ENCODE measurements at regions of chr20 and their contacts with region 1.

Region 1: DNA sequence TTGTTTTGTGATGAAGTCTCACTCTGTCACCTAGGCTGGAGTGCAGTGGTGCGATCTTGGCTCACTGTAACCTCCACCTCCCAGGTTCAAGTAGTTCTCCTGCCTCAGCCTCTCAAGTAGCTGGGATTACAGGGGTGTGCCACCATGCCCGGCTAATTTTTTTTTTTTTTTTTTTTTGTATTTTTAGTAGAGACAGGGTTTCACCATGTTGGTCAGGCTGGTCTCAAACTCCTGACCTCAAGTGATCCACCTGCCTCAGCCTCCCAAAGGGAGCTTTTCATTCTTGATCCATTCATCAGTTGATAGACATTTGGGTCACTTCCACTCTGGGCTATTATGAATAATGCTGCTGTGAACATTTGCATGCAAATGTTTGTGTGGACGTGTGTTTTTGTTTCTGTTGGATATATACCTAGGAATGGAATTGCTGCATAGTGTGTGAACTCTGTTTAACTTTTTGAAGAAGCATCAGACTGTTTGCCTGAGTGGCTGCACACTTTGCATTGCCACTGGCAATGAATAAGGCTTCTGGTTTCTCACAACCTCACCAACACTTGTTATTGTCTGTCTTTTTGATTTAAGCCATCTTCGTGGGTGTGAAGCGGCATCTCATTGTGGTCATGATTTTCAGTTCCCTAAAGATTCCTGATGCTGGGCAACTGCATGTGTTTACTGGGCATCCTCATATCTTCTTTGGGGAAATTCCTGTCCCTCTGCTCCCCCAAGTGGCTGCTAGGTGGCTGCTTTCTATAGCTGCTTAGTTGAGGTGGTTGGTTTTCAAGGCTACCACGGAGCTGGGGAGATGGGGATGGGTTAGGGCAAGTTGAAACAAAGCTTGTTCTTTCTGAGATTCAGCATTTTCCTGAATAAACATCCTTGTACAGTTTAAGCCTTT is 403.6 kb upstream of the SULF2 start:
- DNase-seq: peak; percentile 83
- H3K4me3 ChIP-seq: no peak overlapping the region
- H3K27ac ChIP-seq: no peak overlapping the region
- H3K4me1 ChIP-seq: peaks cover 31% of the 10 kb centered on the region
- H3K27me3 ChIP-seq: no peaks in the 10 kb centered on the region
- CTCF ChIP-seq: peak; percentile 57 to 81

Region 2: DNA sequence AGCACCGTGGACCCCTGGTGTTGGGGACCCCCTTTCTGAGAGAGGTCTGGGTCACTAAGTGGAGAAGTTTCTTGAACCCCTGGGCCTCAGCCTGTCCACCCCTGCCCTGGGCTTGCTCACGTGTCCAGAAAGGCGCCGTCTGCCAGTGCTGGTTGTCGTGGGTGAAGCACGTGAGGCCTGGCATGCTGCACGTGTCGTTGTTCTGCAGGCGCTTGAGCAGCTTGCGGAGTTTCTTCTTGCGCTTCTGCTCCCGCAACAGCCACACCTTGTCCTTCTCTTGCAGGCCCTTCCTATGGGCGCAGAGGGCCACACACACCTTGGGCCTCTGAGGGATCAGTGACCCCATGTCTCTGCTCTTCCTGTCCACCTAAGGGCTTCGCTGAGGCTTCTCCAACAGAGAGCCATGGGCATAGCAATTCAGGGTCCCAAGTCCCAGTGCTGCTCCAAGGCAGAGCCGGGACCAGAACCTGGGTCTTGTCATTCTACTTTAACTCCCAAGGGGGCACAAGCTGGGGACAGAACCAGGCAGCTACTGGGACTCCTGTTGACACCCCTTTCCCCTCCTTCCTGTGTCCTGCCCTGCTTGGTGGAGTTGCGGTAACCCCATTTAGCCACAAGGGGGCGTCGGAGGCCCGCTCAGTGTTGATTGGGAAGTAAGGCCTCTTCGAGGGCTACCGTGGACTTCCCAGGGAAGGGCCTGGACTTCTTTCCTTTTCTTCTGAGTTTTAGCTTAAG is 525.4 kb before region 1 on chr20:
- CTCF ChIA-PET with region 1: no interaction called
- dilution Hi-C with region 1: no loop called
- in situ Hi-C with region 1: no loop called
- intact Hi-C with region 1: loop called (anchors 1 kb)
- DNase-seq: peak; percentile 67
- H3K4me3 ChIP-seq: no peak overlapping the region
- H3K27ac ChIP-seq: no peak overlapping the region
- H3K4me1 ChIP-seq: peaks cover 24% of the 10 kb centered on the region
- H3K27me3 ChIP-seq: no peaks in the 10 kb centered on the region
- CTCF ChIP-seq: peak; percentile 92 to 95

Region 3: GRCh38 chr20:47725248-47725973 is 463.5 kb before region 1 on chr20:
- CTCF ChIA-PET with region 1: no interaction called
- dilution Hi-C with region 1: no loop called
- in situ Hi-C with region 1: no loop called
- intact Hi-C with region 1: loop called (anchors 2 kb)
- DNase-seq: peak; percentile 76
- H3K4me3 ChIP-seq: no peak overlapping the region
- H3K27ac ChIP-seq: no peak overlapping the region
- H3K4me1 ChIP-seq: no peaks in the 10 kb centered on the region
- H3K27me3 ChIP-seq: no peaks in the 10 kb centered on the region
- CTCF ChIP-seq: peak; percentile 92 to 95

Region 4: GRCh38 chr20:47854163-47854562 is 334.7 kb before region 1 on chr20:
- CTCF ChIA-PET with region 1: interaction called, 3 read pairs
- dilution Hi-C with region 1: no loop called
- in situ Hi-C with region 1: no loop called
- intact Hi-C with region 1: loop called (anchors 1 kb)
- DNase-seq: no peak
- H3K4me3 ChIP-seq: no peak overlapping the region
- H3K27ac ChIP-seq: no peak overlapping the region
- H3K4me1 ChIP-seq: no peaks in the 10 kb centered on the region
- H3K27me3 ChIP-seq: no peaks in the 10 kb centered on the region
- CTCF ChIP-seq: no peak

Region 5: DNA sequence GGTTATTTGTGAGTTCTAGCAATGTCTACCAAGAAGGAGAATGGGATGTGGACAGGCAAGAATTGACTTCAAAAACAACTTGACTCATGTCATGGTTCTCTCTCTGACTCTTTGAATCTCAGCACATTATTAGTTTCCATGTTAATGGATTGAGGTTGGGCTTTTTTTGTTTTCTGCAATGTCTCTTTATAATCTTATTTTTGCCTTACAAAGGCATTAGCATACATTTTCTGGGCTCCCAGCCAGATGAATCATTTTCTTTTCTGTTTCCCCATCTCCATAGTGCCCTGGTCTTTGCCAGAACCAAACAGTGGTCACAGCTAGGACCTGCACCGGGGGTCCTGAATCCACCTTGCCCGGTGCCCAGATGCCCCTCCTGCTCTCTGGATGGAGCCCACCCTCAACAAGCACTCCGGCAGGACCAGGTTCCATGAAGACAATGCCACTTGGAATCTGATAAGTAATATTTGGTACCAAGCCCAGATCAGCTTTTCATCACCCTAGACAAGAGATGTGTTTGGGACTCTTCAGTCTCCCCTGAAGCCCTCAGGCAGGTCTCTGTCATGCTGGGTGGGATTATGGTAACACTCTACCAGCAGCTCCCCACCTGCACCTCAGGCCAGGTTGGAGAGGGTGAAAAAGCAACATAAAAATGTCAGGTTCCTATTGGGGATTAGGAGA is 137.0 kb before region 1 on chr20:
- CTCF ChIA-PET with region 1: interaction called, 3 read pairs
- dilution Hi-C with region 1: no loop called
- in situ Hi-C with region 1: no loop called
- intact Hi-C with region 1: loop called (anchors 5 kb)
- DNase-seq: peak; percentile 85
- H3K4me3 ChIP-seq: no peak overlapping the region
- H3K27ac ChIP-seq: peak overlapping the region; percentile 23
- H3K4me1 ChIP-seq: peaks cover 13% of the 10 kb centered on the region
- H3K27me3 ChIP-seq: no peaks in the 10 kb centered on the region
- CTCF ChIP-seq: no peak

Region 6: GRCh38 chr20:48075741-48076488 is 113.0 kb before region 1 on chr20:
- CTCF ChIA-PET with region 1: no interaction called
- dilution Hi-C with region 1: no loop called
- in situ Hi-C with region 1: no loop called
- intact Hi-C with region 1: no loop called
- DNase-seq: no peak
- H3K4me3 ChIP-seq: no peak overlapping the region
- H3K27ac ChIP-seq: no peak overlapping the region
- H3K4me1 ChIP-seq: no peaks in the 10 kb centered on the region
- H3K27me3 ChIP-seq: no peaks in the 10 kb centered on the region
- CTCF ChIP-seq: no peak

Region 7: DNA sequence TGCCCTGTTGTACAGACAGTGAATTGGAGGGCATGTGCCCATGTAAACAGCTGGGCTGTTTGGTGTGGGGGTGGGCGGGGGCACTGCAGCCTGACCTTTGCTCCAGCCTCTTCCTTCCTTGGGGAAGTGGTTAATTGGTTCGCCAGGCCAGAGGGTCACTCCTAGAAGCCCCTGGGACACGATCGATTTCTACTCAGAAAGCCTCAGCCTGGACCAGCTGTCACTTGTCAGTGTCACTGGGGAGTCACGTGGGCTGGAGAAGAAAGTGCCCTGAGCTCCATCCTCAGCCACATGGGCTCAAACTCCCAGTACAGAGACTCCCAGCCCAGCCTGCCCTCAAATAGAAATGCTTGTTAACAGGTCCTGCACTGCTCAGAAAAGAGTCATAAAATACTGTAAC is 20.2 kb after region 1 on chr20:
- CTCF ChIA-PET with region 1: no interaction called
- dilution Hi-C with region 1: no loop called
- in situ Hi-C with region 1: no loop called
- intact Hi-C with region 1: no loop called
- DNase-seq: no peak
- H3K4me3 ChIP-seq: no peak overlapping the region
- H3K27ac ChIP-seq: no peak overlapping the region
- H3K4me1 ChIP-seq: no peaks in the 10 kb centered on the region
- H3K27me3 ChIP-seq: no peaks in the 10 kb centered on the region
- CTCF ChIP-seq: no peak

Region 8: GRCh38 chr20:48295445-48295963 is 106.6 kb after region 1 on chr20:
- CTCF ChIA-PET with region 1: no interaction called
- dilution Hi-C with region 1: no loop called
- in situ Hi-C with region 1: no loop called
- intact Hi-C with region 1: loop called (anchors 1 kb)
- DNase-seq: peak; percentile 88
- H3K4me3 ChIP-seq: no peak overlapping the region
- H3K27ac ChIP-seq: no peak overlapping the region
- H3K4me1 ChIP-seq: peaks cover 31% of the 10 kb centered on the region
- H3K27me3 ChIP-seq: no peaks in the 10 kb centered on the region
- CTCF ChIP-seq: peak; percentile 64 to 66